PC-9 (cell line): ENCODE measurements at regions of chr11 and their contacts with region 1.

Region 1: GRCh38 chr11:67027483-67028196 is 4.7 kb downstream of the SYT12 start:
- DNase-seq: peak in 1 of 2 experiments; percentile 50
- H3K4me3 ChIP-seq: no peak overlapping the region
- H3K27ac ChIP-seq: no peak overlapping the region
- H3K4me1 ChIP-seq: peaks cover 66% of the 10 kb centered on the region
- H3K27me3 ChIP-seq: no peaks in the 10 kb centered on the region
- CTCF ChIP-seq: no peak

Region 2: GRCh38 chr11:66694732-66695207 is 332.9 kb before region 1 on chr11:
- CTCF ChIA-PET with region 1: no interaction called
- POLR2A ChIA-PET with region 1: no interaction called
- intact Hi-C with region 1: no loop called
- DNase-seq: peak; percentile 94 to 96
- H3K4me3 ChIP-seq: no peak overlapping the region
- H3K27ac ChIP-seq: no peak overlapping the region
- H3K4me1 ChIP-seq: no peaks in the 10 kb centered on the region
- H3K27me3 ChIP-seq: no peaks in the 10 kb centered on the region
- CTCF ChIP-seq: peak; percentile 98

Region 3: DNA sequence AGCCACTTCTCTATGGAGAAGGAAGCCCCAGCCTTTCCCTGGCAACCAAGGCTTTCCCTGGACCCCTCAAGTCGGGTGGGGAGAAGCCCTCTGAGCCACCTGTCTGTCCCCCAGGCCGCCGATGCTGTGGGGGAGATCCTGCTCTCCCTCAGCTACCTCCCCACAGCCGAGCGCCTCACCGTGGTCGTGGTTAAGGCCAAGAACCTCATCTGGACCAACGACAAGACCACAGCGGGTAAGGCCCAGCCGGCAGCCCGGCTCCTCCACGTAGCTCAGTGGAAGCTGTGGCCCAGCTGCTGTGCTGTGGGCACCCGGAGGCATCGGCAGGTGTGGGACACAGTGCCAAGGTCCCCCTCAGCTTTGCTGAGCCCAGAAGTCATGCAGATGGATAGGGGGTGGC is 16.8 kb after region 1 on chr11:
- CTCF ChIA-PET with region 1: no interaction called
- POLR2A ChIA-PET with region 1: interaction called, 16 read pairs
- intact Hi-C with region 1: no loop called
- DNase-seq: no peak
- H3K4me3 ChIP-seq: no peak overlapping the region
- H3K27ac ChIP-seq: no peak overlapping the region
- H3K4me1 ChIP-seq: no peaks in the 10 kb centered on the region
- H3K27me3 ChIP-seq: no peaks in the 10 kb centered on the region
- CTCF ChIP-seq: no peak